ENCODE measurements at regions of chr5 and their contacts with region 1.

Region 1: GRCh38 chr5:78899922-78900362 is 85.2 kb downstream of the ARSB start:
- DNase-seq: peak; percentile 44
- ATAC-seq: peak; percentile 86
- H3K4me3 ChIP-seq: no peak overlapping the region
- H3K27ac ChIP-seq: no peak overlapping the region
- H3K4me1 ChIP-seq: no peaks in the 10 kb centered on the region
- H3K27me3 ChIP-seq: no peaks in the 10 kb centered on the region
- CTCF ChIP-seq: peak; percentile 76 to 96 (median 91)
- POLR2A ChIP-seq: no peak
- RAD21 ChIP-seq: peak; percentile 91

Region 2: DNA sequence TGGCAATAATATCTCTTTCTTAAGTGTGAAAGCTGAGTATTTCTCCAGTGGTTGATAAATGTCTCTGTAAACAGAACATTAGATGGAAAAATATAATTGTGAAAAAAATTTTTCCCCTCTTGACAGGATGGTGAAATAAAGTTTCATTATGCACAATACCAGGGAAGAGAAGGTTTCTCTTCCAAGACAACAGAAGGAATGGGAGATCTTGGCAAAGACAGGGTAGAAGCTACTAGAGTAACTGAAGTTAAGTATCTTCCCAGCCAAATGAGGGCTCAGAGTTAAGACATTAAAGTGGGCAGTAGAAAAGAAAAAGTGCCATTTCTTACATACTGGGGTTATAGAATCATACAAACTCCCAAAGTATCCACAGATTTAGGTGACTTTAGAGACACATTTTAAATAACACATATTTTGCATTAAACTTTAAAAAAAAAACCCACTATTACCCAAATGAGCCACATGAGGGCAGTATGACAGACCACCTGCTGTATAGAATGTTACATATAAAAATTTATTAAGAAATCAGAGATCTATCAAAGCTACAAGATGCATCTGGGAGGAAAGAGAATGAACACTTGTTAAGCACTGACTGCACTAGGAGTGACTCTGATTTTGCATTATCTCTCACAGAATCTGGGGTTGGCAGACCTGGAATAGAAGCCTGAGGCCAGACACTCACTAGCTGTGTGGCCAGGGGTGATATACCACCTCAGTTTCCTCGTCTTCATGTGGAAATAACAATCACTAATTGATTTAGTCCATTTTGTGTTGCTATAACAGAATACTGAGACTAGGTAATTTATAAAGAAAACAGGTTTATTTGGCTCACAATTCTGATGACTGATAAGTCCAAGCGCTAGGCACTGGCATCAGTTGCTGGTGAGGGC is 13.4 kb before region 1 on chr5:
- CTCF ChIA-PET with region 1: interaction called, 13 read pairs
- POLR2A ChIA-PET with region 1: no interaction called
- RAD21 ChIA-PET with region 1: interaction called in 1 of 2 experiments, 5 read pairs
- intact Hi-C with region 1: no loop called
- DNase-seq: no peak
- ATAC-seq: peak; percentile 36; the same call in 1 of the 2 replicates
- H3K4me3 ChIP-seq: no peak overlapping the region
- H3K27ac ChIP-seq: no peak overlapping the region
- H3K4me1 ChIP-seq: peaks cover 0 to 5% of the 10 kb centered on the region in 2 experiments; a peak in 2 of 4 replicates
- H3K27me3 ChIP-seq: no peaks in the 10 kb centered on the region
- CTCF ChIP-seq: peak; percentile 30 to 77 (median 56); a peak in 5 of 6 replicates
- POLR2A ChIP-seq: no peak
- RAD21 ChIP-seq: peak; percentile 31; the same call in 1 of the 2 replicates

Region 3: DNA sequence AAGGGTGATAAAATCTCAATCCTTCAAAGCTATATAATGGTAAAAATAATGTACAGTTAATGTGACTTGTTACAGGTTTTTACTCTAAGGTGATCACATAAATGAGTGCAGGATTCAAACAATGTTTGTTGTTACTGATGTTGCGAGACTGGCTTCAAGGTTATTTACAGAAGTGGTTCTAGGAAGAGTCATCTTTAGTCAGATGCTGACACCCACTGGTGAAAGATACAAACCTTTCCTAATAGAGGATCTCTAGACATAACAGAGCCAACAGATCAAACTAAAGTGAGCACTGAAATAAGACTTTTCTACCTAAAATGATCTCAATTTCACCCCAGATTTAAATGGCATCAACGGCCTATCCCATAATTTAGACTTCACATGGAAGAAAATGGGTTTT is 64.9 kb after region 1 on chr5:
- CTCF ChIA-PET with region 1: interaction called, 58 read pairs
- POLR2A ChIA-PET with region 1: no interaction called
- RAD21 ChIA-PET with region 1: interaction called, 4 read pairs
- intact Hi-C with region 1: loop called (anchors 1 kb)
- DNase-seq: peak; percentile 48
- ATAC-seq: peak; percentile 79
- H3K4me3 ChIP-seq: no peak overlapping the region
- H3K27ac ChIP-seq: no peak overlapping the region
- H3K4me1 ChIP-seq: no peaks in the 10 kb centered on the region
- H3K27me3 ChIP-seq: no peaks in the 10 kb centered on the region
- CTCF ChIP-seq: peak; percentile 38 to 56 (median 48); a peak in 5 of 6 replicates
- POLR2A ChIP-seq: no peak
- RAD21 ChIP-seq: peak; percentile 80

Region 4: DNA sequence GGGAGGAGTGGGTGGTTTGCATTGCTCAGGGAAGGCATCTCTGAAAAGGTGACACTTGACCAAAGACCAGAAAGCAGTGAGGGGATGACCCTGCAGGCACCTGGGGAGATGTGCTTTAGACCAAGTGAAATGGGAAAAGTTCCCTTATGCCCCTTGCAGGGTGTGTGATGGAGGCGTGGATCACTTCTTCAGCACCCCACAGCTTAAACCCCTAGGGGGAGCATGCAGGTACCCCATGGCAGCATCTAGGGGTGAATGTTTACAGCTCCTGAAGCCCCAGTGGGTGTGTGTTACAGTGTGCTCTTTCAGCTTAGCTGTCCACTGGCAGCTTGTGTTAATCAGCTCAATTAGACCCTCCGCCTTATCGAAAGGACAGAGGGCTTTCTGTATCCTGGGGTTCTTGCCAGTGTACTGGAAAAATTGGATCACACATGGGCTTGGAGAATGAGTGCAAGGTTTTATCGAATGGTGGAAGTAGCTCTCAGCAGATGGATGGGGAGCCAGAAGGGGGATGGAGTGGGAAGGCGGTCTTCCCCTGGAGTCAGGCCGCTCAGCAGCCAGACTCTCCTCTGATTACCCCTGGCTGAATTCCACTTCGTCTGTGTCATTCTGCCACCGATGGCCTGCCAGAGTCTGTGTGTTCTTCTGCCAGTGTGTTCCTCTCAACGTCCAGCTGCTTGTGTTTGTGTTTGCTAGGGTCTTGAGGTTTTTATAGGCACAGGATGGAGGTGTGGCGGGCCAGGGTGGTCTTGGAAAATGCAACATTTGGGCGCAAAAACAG is 175.9 kb after region 1 on chr5:
- CTCF ChIA-PET with region 1: no interaction called
- POLR2A ChIA-PET with region 1: no interaction called
- RAD21 ChIA-PET with region 1: no interaction called
- intact Hi-C with region 1: no loop called
- DNase-seq: no peak
- ATAC-seq: no peak
- H3K4me3 ChIP-seq: no peak overlapping the region
- H3K27ac ChIP-seq: no peak overlapping the region
- H3K4me1 ChIP-seq: peaks cover 0 to 8% of the 10 kb centered on the region in 2 experiments; a peak in 2 of 4 replicates
- H3K27me3 ChIP-seq: no peaks in the 10 kb centered on the region
- CTCF ChIP-seq: 0 out of 6 replicates have a peak, but pooled peaks of 1 of the 3 experiments have one; percentile 5
- POLR2A ChIP-seq: no peak
- RAD21 ChIP-seq: no peak

Region 5: GRCh38 chr5:79109527-79110492 is 209.9 kb after region 1 on chr5:
- CTCF ChIA-PET with region 1: no interaction called
- POLR2A ChIA-PET with region 1: no interaction called
- RAD21 ChIA-PET with region 1: no interaction called
- intact Hi-C with region 1: loop called (anchors 10 kb)
- DNase-seq: peak; percentile 29
- ATAC-seq: peak; percentile 92
- H3K4me3 ChIP-seq: no peak overlapping the region
- H3K27ac ChIP-seq: no peak overlapping the region
- H3K4me1 ChIP-seq: no peaks in the 10 kb centered on the region
- H3K27me3 ChIP-seq: no peaks in the 10 kb centered on the region
- CTCF ChIP-seq: peak; percentile 54 to 84 (median 81); a peak in 5 of 6 replicates
- POLR2A ChIP-seq: no peak
- RAD21 ChIP-seq: peak; percentile 60

Region 6: GRCh38 chr5:79235634-79236363 is 335.9 kb after region 1 on chr5 and contains the start of gene JMY:
- CTCF ChIA-PET with region 1: no interaction called
- POLR2A ChIA-PET with region 1: no interaction called
- RAD21 ChIA-PET with region 1: no interaction called
- intact Hi-C with region 1: no loop called
- DNase-seq: peak; percentile 55
- ATAC-seq: peak; percentile 92
- H3K4me3 ChIP-seq: peak within 1 kb of the TSS; percentile 76 to 81
- H3K27ac ChIP-seq: peak within 1 kb of the TSS; percentile 77
- H3K4me1 ChIP-seq: peaks cover 6 to 18% of the 10 kb centered on the region in 2 experiments; a peak in 3 of 4 replicates
- H3K27me3 ChIP-seq: no peaks in the 10 kb centered on the region
- CTCF ChIP-seq: no peak
- POLR2A ChIP-seq: peak; percentile 89
- RAD21 ChIP-seq: no peak; the same call in 1 of the 2 replicates
- total RNA-seq, gene JMY: 15.6 TPM

Region 7: DNA sequence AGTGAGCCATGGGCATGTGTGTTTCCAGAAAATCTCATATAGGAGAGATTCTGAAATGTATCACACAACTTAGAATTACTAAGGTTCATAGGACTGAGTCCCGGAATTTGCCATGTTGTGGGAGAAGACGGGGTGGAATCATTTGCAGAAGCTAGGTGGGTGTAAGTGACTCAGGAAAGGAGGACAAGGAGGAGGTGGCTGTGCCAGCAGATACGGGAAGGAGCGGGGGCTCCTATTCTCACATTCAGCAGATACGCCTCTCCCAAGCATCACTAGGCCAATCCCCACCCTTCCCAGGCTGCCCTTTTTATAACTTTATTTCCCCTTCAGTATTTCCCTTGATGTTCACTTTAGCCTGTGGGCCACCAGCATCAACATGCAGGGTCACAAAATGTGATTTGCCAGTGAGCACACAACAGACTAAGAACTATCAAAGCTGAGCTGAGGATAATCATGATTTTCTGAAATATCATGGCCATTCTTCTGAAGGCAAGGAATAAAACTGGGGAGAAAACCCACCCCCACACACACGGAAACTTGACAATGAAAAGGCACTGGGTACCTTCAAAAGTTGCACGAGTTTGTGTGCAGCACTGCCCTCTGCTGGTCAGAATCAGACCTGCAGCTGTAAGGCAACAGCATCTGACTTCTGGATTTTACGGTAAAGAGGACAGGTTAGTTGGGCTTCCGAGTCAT is 957.9 kb after region 1 on chr5:
- CTCF ChIA-PET with region 1: no interaction called
- POLR2A ChIA-PET with region 1: no interaction called
- RAD21 ChIA-PET with region 1: no interaction called
- intact Hi-C with region 1: loop called (anchors 10 kb)
- DNase-seq: peak; percentile 49
- ATAC-seq: peak; percentile 76
- H3K4me3 ChIP-seq: no peak overlapping the region
- H3K27ac ChIP-seq: no peak overlapping the region
- H3K4me1 ChIP-seq: peaks cover 4 to 11% of the 10 kb centered on the region in 2 experiments; a peak in 3 of 4 replicates
- H3K27me3 ChIP-seq: no peaks in the 10 kb centered on the region
- CTCF ChIP-seq: peak; percentile 75 to 98 (median 95); a peak in 5 of 6 replicates
- POLR2A ChIP-seq: no peak
- RAD21 ChIP-seq: peak; percentile 89

Region 8: GRCh38 chr5:80109646-80110478 is 1209.9 kb after region 1 on chr5:
- CTCF ChIA-PET with region 1: no interaction called
- POLR2A ChIA-PET with region 1: no interaction called
- RAD21 ChIA-PET with region 1: no interaction called
- intact Hi-C with region 1: no loop called
- DNase-seq: no peak
- ATAC-seq: no peak
- H3K4me3 ChIP-seq: no peak overlapping the region
- H3K27ac ChIP-seq: no peak overlapping the region
- H3K4me1 ChIP-seq: no peaks in the 10 kb centered on the region
- H3K27me3 ChIP-seq: no peaks in the 10 kb centered on the region
- CTCF ChIP-seq: no peak
- POLR2A ChIP-seq: no peak
- RAD21 ChIP-seq: no peak